ENCODE measurements at regions of chr2 and their contacts with region 1.

Region 1: GRCh38 chr2:171452773-171453172 is 18.7 kb downstream of the DCAF17 start:
- DNase-seq: no peak
- H3K4me3 ChIP-seq: no peak overlapping the region
- H3K27ac ChIP-seq: no peak overlapping the region
- H3K4me1 ChIP-seq: no peaks in the 10 kb centered on the region
- H3K27me3 ChIP-seq: no peaks in the 10 kb centered on the region
- CTCF ChIP-seq: no peak
- EP300 ChIP-seq: no peak
- POLR2A ChIP-seq: no peak

Region 2: DNA sequence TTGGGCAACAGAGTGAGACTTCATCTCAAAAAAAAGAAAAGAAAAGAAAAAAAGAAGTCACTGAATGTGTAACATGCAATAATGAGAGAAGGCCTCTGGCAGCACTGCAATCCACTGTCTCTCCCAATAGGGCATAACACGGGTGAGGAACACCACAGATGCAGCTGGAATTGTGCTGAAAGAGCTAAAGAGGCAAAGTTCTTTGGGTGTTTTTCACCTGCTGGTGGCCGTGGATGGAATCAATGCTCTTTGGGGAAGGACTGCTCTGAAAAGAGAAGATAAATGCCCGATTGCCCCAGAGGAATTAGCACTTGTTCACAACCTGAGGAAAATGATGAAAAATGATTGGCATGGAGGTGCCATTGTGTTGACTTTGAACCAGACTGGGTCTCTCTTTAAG is 38.5 kb after region 1 on chr2:
- intact Hi-C with region 1: loop called in 1 of 4 experiments (anchors 1 kb)
- DNase-seq: no peak
- H3K4me3 ChIP-seq: no peak overlapping the region
- H3K27ac ChIP-seq: no peak overlapping the region
- H3K4me1 ChIP-seq: no peaks in the 10 kb centered on the region
- H3K27me3 ChIP-seq: no peaks in the 10 kb centered on the region
- CTCF ChIP-seq: no peak
- EP300 ChIP-seq: no peak
- POLR2A ChIP-seq: no peak

Region 3: GRCh38 chr2:172131713-172132555 is 679.2 kb after region 1 on chr2:
- intact Hi-C with region 1: loop called in 1 of 4 experiments (anchors 10 kb)
- DNase-seq: no peak
- H3K4me3 ChIP-seq: no peak overlapping the region
- H3K27ac ChIP-seq: no peak overlapping the region
- H3K4me1 ChIP-seq: no peaks in the 10 kb centered on the region
- H3K27me3 ChIP-seq: no peaks in the 10 kb centered on the region
- CTCF ChIP-seq: no peak
- EP300 ChIP-seq: no peak
- POLR2A ChIP-seq: no peak

Measured in ovary (tissue), 10 donors.